Right ventricle myocardium superior (tissue), 1 donor: ENCODE measurements at regions of chrX and their contacts with region 1.

Region 1: GRCh38 chrX:140664939-140665338 is 44.6 kb upstream of the LINC00632 start:
- DNase-seq: no peak
- ATAC-seq: no peak

Region 2: DNA sequence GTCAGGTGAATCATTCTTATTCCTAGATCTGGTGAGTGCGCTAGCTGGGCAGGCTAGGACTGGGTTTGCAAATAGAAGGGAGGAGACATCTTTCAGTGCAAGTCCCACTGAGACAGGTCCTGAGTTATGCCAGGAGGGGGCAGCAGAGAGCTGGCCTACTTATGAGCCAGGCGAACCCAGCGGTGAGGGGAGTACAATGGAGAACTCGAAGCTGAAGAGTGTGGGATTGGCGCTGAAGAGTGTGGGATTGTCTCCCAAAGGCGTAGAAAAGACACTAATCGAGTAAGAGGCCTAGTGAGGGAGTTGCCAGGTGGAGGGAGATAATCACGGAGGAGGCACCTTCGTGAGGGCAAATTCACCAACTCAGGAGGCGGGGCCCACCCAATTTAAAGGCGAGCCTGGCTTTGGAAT is 607.9 kb before region 1 on chrX:
- intact Hi-C with region 1: loop called (anchors 5 kb)
- DNase-seq: peak; percentile 74
- ATAC-seq: peak; percentile 78

Region 3: GRCh38 chrX:140507991-140508323 is 157.0 kb before region 1 on chrX:
- intact Hi-C with region 1: no loop called
- DNase-seq: no peak
- ATAC-seq: no peak